ENCODE measurements at regions of chr18 and their contacts with region 1.

Region 1: GRCh38 chr18:23357996-23358594 is 95.0 kb upstream of the RIOK3 start:
- DNase-seq: no peak
- H3K4me3 ChIP-seq: no peak overlapping the region
- H3K27ac ChIP-seq: no peak overlapping the region
- H3K27me3 ChIP-seq: no peaks in the 10 kb centered on the region
- CTCF ChIP-seq: no peak

Region 2: DNA sequence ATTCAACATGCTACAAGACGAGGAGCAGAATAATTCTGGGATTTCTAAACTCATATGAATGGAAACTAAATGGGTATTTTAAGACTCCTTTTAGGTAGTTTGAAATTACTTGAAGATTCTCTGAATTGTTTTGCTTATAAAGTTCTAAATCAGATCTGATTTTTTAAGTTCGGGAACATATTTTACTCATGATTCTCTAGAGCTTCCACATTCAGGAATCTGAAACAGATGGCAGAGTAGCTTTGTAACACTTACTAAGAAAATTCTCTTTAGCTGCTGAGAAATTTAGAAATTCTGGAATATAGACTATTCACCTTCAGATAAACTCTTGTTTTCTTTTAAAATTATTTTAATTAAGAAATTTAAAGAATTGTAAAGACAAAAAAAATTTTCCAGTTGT is 411.2 kb before region 1 on chr18:
- CTCF ChIA-PET with region 1: no interaction called
- POLR2A ChIA-PET with region 1: no interaction called
- DNase-seq: no peak
- H3K4me3 ChIP-seq: no peak overlapping the region
- H3K27ac ChIP-seq: no peak overlapping the region
- H3K27me3 ChIP-seq: no peaks in the 10 kb centered on the region
- CTCF ChIP-seq: no peak

Region 3: GRCh38 chr18:23243178-23243577 is 114.9 kb before region 1 on chr18:
- CTCF ChIA-PET with region 1: no interaction called
- POLR2A ChIA-PET with region 1: interaction called, 12 read pairs
- DNase-seq: no peak
- H3K4me3 ChIP-seq: no peak overlapping the region
- H3K27ac ChIP-seq: no peak overlapping the region
- H3K27me3 ChIP-seq: no peaks in the 10 kb centered on the region
- CTCF ChIP-seq: no peak

Measured in AG04450 (cell line).